ENCODE measurements at regions of chr21 and their contacts with region 1.

Region 1: DNA sequence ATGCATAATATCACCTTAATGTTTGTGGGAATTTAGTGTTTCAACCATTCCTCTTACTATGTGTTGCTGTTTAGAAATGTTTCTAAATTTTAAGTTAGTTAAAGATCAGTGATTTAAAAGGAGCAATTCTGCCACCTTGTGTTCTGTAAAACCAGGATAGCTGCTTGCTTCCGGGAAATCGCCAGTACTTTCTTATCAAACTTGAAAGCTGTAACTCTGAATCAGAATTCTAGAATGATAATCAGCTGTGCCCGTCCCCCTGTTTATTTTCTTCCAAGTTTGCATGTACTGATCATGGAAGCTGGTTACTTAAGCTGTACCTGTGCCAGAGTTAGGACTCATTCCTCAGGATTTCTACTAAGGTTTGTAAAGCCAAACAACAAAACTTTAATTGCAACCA is 656.4 kb downstream of the LTN1 start:
- DNase-seq: peak in 1 of 2 donors; percentile 8
- ATAC-seq: peak in 5 of 8 donors; percentile 34 to 59 (median 41)
- H3K4me3 ChIP-seq: no peak overlapping the region
- H3K27ac ChIP-seq: peak overlapping the region in 3 of 10 donors; percentile 7 to 64 (median 36)
- H3K4me1 ChIP-seq: peaks cover 0 to 41% (median 26%) of the 10 kb centered on the region in 9 donors
- H3K27me3 ChIP-seq: no peaks in the 10 kb centered on the region
- CTCF ChIP-seq: peak; percentile 12 to 78 (median 51)

Region 2: GRCh38 chr21:26850108-26850643 is 1486.1 kb before region 1 on chr21:
- intact Hi-C with region 1: loop called (anchors 2 to 10 kb)
- DNase-seq: no peak
- ATAC-seq: no peak
- H3K4me3 ChIP-seq: peak overlapping the region in 6 of 10 donors; percentile 4 to 18 (median 8)
- H3K27ac ChIP-seq: no peak overlapping the region
- H3K4me1 ChIP-seq: peaks cover 0 to 33% (median 21%) of the 10 kb centered on the region in 9 donors
- H3K27me3 ChIP-seq: peaks cover 0 to 31% (median 0%) of the 10 kb centered on the region in 7 donors
- CTCF ChIP-seq: peak; percentile 56 to 84 (median 71)

Region 3: GRCh38 chr21:27759091-27759659 is 577.1 kb before region 1 on chr21:
- intact Hi-C with region 1: loop called in 4 of 10 experiments (anchors 5 to 10 kb)
- DNase-seq: peak; percentile 18 to 27
- ATAC-seq: peak in 6 of 8 donors; percentile 64 to 83 (median 76)
- H3K4me3 ChIP-seq: no peak overlapping the region
- H3K27ac ChIP-seq: no peak overlapping the region
- H3K4me1 ChIP-seq: peaks cover 0 to 14% (median 7%) of the 10 kb centered on the region in 9 donors
- H3K27me3 ChIP-seq: no peaks in the 10 kb centered on the region
- CTCF ChIP-seq: peak in 8 of 9 donors; percentile 37 to 63 (median 52)

Region 4: DNA sequence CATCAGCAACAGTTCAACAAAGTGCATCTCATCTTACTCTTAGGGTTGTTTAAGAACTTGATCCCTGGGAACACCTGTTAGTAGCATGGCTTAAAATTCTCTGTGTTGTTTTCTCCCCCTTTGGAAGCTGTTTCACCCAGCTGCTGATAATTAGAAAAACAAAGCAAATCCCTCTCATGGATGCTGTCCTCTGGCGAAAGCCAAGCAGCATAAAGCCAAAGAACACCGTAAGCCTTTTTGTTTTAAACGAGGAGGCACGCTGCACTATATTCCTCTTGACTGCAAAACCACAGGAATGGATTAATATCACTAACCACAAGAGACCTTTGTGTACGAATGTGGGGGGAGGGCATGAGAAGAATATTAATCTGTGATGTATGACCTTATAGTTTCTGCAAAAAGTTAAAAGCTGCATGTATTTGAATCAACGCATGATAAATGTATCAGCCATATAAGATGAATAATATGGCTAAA is 266.8 kb before region 1 on chr21:
- intact Hi-C with region 1: loop called in 3 of 10 experiments (anchors 5 to 10 kb)
- DNase-seq: no peak
- ATAC-seq: no peak
- H3K4me3 ChIP-seq: no peak overlapping the region
- H3K27ac ChIP-seq: no peak overlapping the region
- H3K4me1 ChIP-seq: peaks cover 0 to 32% (median 24%) of the 10 kb centered on the region in 9 donors
- H3K27me3 ChIP-seq: no peaks in the 10 kb centered on the region
- CTCF ChIP-seq: no peak

Region 5: DNA sequence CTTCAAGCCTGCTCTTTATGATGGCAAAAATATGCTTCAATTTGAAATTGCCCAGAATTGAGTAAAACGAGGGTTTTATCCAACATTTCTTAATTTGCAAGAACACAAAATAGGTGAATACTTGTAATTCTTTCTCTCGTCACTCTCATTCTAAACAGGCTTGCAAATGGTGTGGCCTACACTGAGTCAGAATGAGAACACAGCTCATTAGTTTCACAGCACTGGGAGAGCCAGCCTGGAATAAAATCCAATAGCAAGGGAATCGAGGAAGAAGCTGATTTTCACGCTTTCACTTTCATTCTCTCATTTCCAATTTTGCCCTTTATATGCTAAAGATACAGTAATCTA is 118.9 kb after region 1 on chr21:
- intact Hi-C with region 1: no loop called
- DNase-seq: no peak
- ATAC-seq: no peak
- H3K4me3 ChIP-seq: no peak overlapping the region
- H3K27ac ChIP-seq: no peak overlapping the region
- H3K4me1 ChIP-seq: no peaks in the 10 kb centered on the region
- H3K27me3 ChIP-seq: no peaks in the 10 kb centered on the region
- CTCF ChIP-seq: no peak